B cell (primary cell): ENCODE measurements at regions of chr11 and their contacts with region 1.

Region 1: GRCh38 chr11:44596525-44597276 is 31.2 kb downstream of the CD82 start:
- DNase-seq: peak; percentile 90
- ATAC-seq: peak; percentile 25
- H3K4me3 ChIP-seq: peak overlapping the region in 2 of 5 experiments; percentile 9 to 28
- H3K4me3 Mint-ChIP-seq: peak overlapping the region; percentile 77
- H3K27ac ChIP-seq: peak overlapping the region; percentile 78 to 85
- H3K27ac Mint-ChIP-seq: peak overlapping the region; percentile 92
- H3K4me1 ChIP-seq: peaks cover 69 to 92% of the 10 kb centered on the region in 2 donors
- H3K4me1 Mint-ChIP-seq: peaks cover 94% of the 10 kb centered on the region
- H3K27me3 ChIP-seq: no peaks in the 10 kb centered on the region
- H3K27me3 Mint-ChIP-seq: no peaks in the 10 kb centered on the region
- CTCF ChIP-seq: no peak

Region 2: GRCh38 chr11:44611687-44612434 is 15.2 kb after region 1 on chr11:
- CTCF ChIA-PET with region 1: interaction called, 313 read pairs
- POLR2A ChIA-PET with region 1: interaction called, 189 read pairs
- intact Hi-C with region 1: loop called (anchors 1 kb)
- DNase-seq: peak; percentile 94
- ATAC-seq: peak; percentile 51
- H3K4me3 ChIP-seq: peak overlapping the region in 2 of 5 experiments; percentile 2 to 40
- H3K4me3 Mint-ChIP-seq: peak overlapping the region; percentile 59
- H3K27ac ChIP-seq: peak overlapping the region; percentile 97 to 99
- H3K27ac Mint-ChIP-seq: peak overlapping the region; percentile 96
- H3K4me1 ChIP-seq: peaks cover 97 to 100% of the 10 kb centered on the region in 2 donors
- H3K4me1 Mint-ChIP-seq: peaks cover 97% of the 10 kb centered on the region
- H3K27me3 ChIP-seq: no peaks in the 10 kb centered on the region
- H3K27me3 Mint-ChIP-seq: no peaks in the 10 kb centered on the region
- CTCF ChIP-seq: no peak

Region 3: GRCh38 chr11:44950625-44951476 is 354.1 kb after region 1 on chr11 and contains the start of gene TP53I11:
- CTCF ChIA-PET with region 1: no interaction called
- POLR2A ChIA-PET with region 1: no interaction called
- intact Hi-C with region 1: loop called (anchors 10 kb)
- DNase-seq: peak; percentile 84
- ATAC-seq: peak; percentile 76
- H3K4me3 ChIP-seq: peak within 1 kb of the TSS; percentile 51 to 97 (median 83)
- H3K4me3 Mint-ChIP-seq: peak within 1 kb of the TSS; percentile 89
- H3K27ac ChIP-seq: peak within 1 kb of the TSS; percentile 64 to 85
- H3K27ac Mint-ChIP-seq: peak within 1 kb of the TSS; percentile 78
- H3K4me1 ChIP-seq: peaks cover 13 to 31% of the 10 kb centered on the region in 2 donors
- H3K4me1 Mint-ChIP-seq: peaks cover 61% of the 10 kb centered on the region
- H3K27me3 ChIP-seq: no peaks in the 10 kb centered on the region
- H3K27me3 Mint-ChIP-seq: no peaks in the 10 kb centered on the region
- CTCF ChIP-seq: peak; percentile 80
- total RNA-seq, gene TP53I11: 229 and 240 TPM in 2 replicates

Region 4: GRCh38 chr11:45593992-45594391 is 997.3 kb after region 1 on chr11:
- CTCF ChIA-PET with region 1: no interaction called
- POLR2A ChIA-PET with region 1: no interaction called
- intact Hi-C with region 1: no loop called
- DNase-seq: no peak
- ATAC-seq: no peak
- H3K4me3 ChIP-seq: no peak overlapping the region
- H3K4me3 Mint-ChIP-seq: no peak overlapping the region
- H3K27ac ChIP-seq: no peak overlapping the region
- H3K27ac Mint-ChIP-seq: no peak overlapping the region
- H3K4me1 ChIP-seq: no peaks in the 10 kb centered on the region
- H3K4me1 Mint-ChIP-seq: no peaks in the 10 kb centered on the region
- H3K27me3 ChIP-seq: peaks cover 0 to 11% (median 0%) of the 10 kb centered on the region in 4 experiments
- H3K27me3 Mint-ChIP-seq: peaks cover 15% of the 10 kb centered on the region
- CTCF ChIP-seq: no peak